ENCODE measurements at regions of chr20 and their contacts with region 1.

Region 1: GRCh38 chr20:62237801-62238571 is at the start of gene OSBPL2:
- DNase-seq: peak; percentile 99
- ATAC-seq: peak; percentile 89
- H3K4me3 ChIP-seq: peak within 1 kb of the TSS; percentile 85 to 97 (median 86)
- H3K27ac ChIP-seq: peak within 1 kb of the TSS; percentile 60
- H3K4me1 ChIP-seq: peaks cover 36% of the 10 kb centered on the region
- H3K27me3 ChIP-seq: peaks cover 3 to 18% of the 10 kb centered on the region in 2 experiments; a peak in 3 of 5 replicates
- CTCF ChIP-seq: peak; percentile 34; the same call in 1 of the 2 replicates
- EP300 ChIP-seq: peak in 1 of 2 experiments; percentile 59; a peak in 1 of 4 replicates
- POLR2A ChIP-seq: peak in 1 of 2 experiments; percentile 44; a peak in 2 of 4 replicates
- RAD21 ChIP-seq: peak; percentile 35; the same call in 1 of the 2 replicates
- total RNA-seq, gene OSBPL2: 37.4 and 41.5 TPM in 2 replicates

Region 2: GRCh38 chr20:62182613-62183425 is 55.2 kb before region 1 on chr20 and contains the start of gene MTG2:
- CTCF ChIA-PET with region 1: no interaction called
- POLR2A ChIA-PET with region 1: no interaction called
- in situ Hi-C with region 1: no loop called
- intact Hi-C with region 1: loop called (anchors 1 kb)
- DNase-seq: peak; percentile 98
- ATAC-seq: peak; percentile 93
- H3K4me3 ChIP-seq: peak within 1 kb of the TSS; percentile 87 to 96 (median 90)
- H3K27ac ChIP-seq: peak within 1 kb of the TSS; percentile 90
- H3K4me1 ChIP-seq: peaks cover 48% of the 10 kb centered on the region
- H3K27me3 ChIP-seq: no peaks in the 10 kb centered on the region; a peak in 1 of 5 replicates
- CTCF ChIP-seq: 0 out of 2 replicates have a peak, but pooled peaks have one; percentile 45
- EP300 ChIP-seq: no peak; a peak in 1 of 4 replicates
- POLR2A ChIP-seq: peak; percentile 97 to 100
- RAD21 ChIP-seq: peak; percentile 79
- total RNA-seq, gene MTG2: 31.3 and 37.8 TPM in 2 replicates

Region 3: GRCh38 chr20:62310757-62311121 is 72.8 kb after region 1 on chr20:
- CTCF ChIA-PET with region 1: no interaction called
- POLR2A ChIA-PET with region 1: no interaction called
- in situ Hi-C with region 1: no loop called
- intact Hi-C with region 1: no loop called
- DNase-seq: no peak
- ATAC-seq: peak; percentile 1
- H3K4me3 ChIP-seq: no peak overlapping the region
- H3K27ac ChIP-seq: no peak overlapping the region
- H3K4me1 ChIP-seq: peaks cover 13% of the 10 kb centered on the region
- H3K27me3 ChIP-seq: no peaks in the 10 kb centered on the region
- CTCF ChIP-seq: no peak
- EP300 ChIP-seq: no peak
- POLR2A ChIP-seq: no peak
- RAD21 ChIP-seq: no peak

Region 4: GRCh38 chr20:62427172-62428001 is 189.4 kb after region 1 on chr20 and contains the start of gene RBBP8NL:
- CTCF ChIA-PET with region 1: no interaction called
- POLR2A ChIA-PET with region 1: no interaction called
- in situ Hi-C with region 1: no loop called
- intact Hi-C with region 1: no loop called
- DNase-seq: no peak
- ATAC-seq: peak; percentile 2; the same call in 2 of the 3 replicates
- H3K4me3 ChIP-seq: no peak within 1 kb of the TSS
- H3K27ac ChIP-seq: no peak within 1 kb of the TSS
- H3K4me1 ChIP-seq: peaks cover 47% of the 10 kb centered on the region
- H3K27me3 ChIP-seq: peaks cover 28 to 93% of the 10 kb centered on the region in 2 experiments
- CTCF ChIP-seq: no peak
- EP300 ChIP-seq: no peak
- POLR2A ChIP-seq: no peak
- RAD21 ChIP-seq: no peak
- total RNA-seq, gene RBBP8NL: 0.46 and 0.86 TPM in 2 replicates